ENCODE measurements at regions of chr1 and their contacts with region 1.

Region 1: GRCh38 chr1:231866392-231867331 is 240.1 kb downstream of the DISC1 start:
- DNase-seq: peak; percentile 39 to 64
- ATAC-seq: peak in 6 of 8 donors; percentile 28 to 69 (median 45)
- H3K4me3 ChIP-seq: no peak overlapping the region
- H3K27ac ChIP-seq: no peak overlapping the region
- H3K4me1 ChIP-seq: peaks cover 14 to 56% (median 41%) of the 10 kb centered on the region in 9 donors
- H3K27me3 ChIP-seq: no peaks in the 10 kb centered on the region
- CTCF ChIP-seq: peak; percentile 81 to 95 (median 90)

Region 2: GRCh38 chr1:231757101-231757404 is 109.6 kb before region 1 on chr1:
- intact Hi-C with region 1: loop called in 2 of 10 experiments (anchors 5 to 10 kb)
- DNase-seq: no peak
- ATAC-seq: peak in 5 of 8 donors; percentile 16 to 35 (median 31)
- H3K4me3 ChIP-seq: no peak overlapping the region
- H3K27ac ChIP-seq: no peak overlapping the region
- H3K4me1 ChIP-seq: peaks cover 0 to 6% (median 0%) of the 10 kb centered on the region in 9 donors
- H3K27me3 ChIP-seq: no peaks in the 10 kb centered on the region
- CTCF ChIP-seq: peak in 1 of 9 donors; percentile 28

Region 3: GRCh38 chr1:231899713-231900440 is 33.2 kb after region 1 on chr1:
- intact Hi-C with region 1: no loop called
- DNase-seq: no peak
- ATAC-seq: no peak
- H3K4me3 ChIP-seq: no peak overlapping the region
- H3K27ac ChIP-seq: no peak overlapping the region
- H3K4me1 ChIP-seq: peaks cover 0 to 6% (median 0%) of the 10 kb centered on the region in 9 donors
- H3K27me3 ChIP-seq: no peaks in the 10 kb centered on the region
- CTCF ChIP-seq: no peak

Region 4: DNA sequence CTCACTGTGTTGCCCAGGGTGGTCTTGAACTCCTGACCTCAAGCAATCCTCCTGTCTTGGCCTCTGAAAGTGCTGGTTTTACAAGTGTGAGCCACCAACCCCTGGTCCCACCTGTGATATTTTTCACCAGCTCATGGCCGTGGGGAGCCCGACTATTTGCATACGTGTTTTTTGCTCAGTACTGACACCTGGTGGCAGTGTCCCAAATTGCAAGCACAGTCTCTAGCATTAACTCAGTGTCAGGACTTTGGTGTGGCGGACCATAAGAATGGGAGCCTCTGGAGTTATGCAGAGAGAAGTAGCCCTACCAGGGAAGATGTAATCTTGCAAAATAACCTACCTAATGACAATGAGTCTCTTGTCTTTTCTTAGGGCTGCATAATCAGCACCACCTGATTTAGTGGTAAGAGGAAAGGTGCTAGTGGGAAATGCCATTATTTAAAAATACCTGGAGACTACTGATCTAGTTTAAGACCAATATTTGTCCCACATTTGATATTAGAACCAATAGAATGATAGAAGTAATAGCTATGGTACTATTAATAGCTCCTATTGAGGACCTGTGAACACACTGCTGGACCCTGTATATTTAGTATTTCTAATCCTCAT is 65.3 kb after region 1 on chr1:
- intact Hi-C with region 1: loop called in 3 of 10 experiments (anchors 2 to 5 kb)
- DNase-seq: no peak
- ATAC-seq: no peak
- H3K4me3 ChIP-seq: no peak overlapping the region
- H3K27ac ChIP-seq: no peak overlapping the region
- H3K4me1 ChIP-seq: peaks cover 15 to 82% (median 62%) of the 10 kb centered on the region in 9 donors
- H3K27me3 ChIP-seq: no peaks in the 10 kb centered on the region
- CTCF ChIP-seq: peak; percentile 11 to 58 (median 38)

Region 5: GRCh38 chr1:232306269-232306961 is 439.8 kb after region 1 on chr1:
- intact Hi-C with region 1: loop called in 6 of 10 experiments (anchors 5 to 10 kb)
- DNase-seq: peak; percentile 45 to 63
- ATAC-seq: peak; percentile 78 to 94 (median 90)
- H3K4me3 ChIP-seq: no peak overlapping the region
- H3K27ac ChIP-seq: peak overlapping the region in 8 of 10 donors; percentile 9 to 73 (median 56)
- H3K4me1 ChIP-seq: peaks cover 0 to 27% (median 19%) of the 10 kb centered on the region in 9 donors
- H3K27me3 ChIP-seq: no peaks in the 10 kb centered on the region
- CTCF ChIP-seq: peak; percentile 10 to 67 (median 46)

Region 6: GRCh38 chr1:232403017-232403714 is 536.5 kb after region 1 on chr1:
- intact Hi-C with region 1: loop called in 3 of 10 experiments (anchors 10 kb)
- DNase-seq: peak; percentile 25 to 29
- ATAC-seq: peak; percentile 29 to 80 (median 70)
- H3K4me3 ChIP-seq: no peak overlapping the region
- H3K27ac ChIP-seq: peak overlapping the region in 6 of 10 donors; percentile 17 to 56 (median 32)
- H3K4me1 ChIP-seq: peaks cover 0 to 37% (median 8%) of the 10 kb centered on the region in 9 donors
- H3K27me3 ChIP-seq: no peaks in the 10 kb centered on the region
- CTCF ChIP-seq: peak in 3 of 9 donors; percentile 23 to 33 (median 23)

Region 7: GRCh38 chr1:232620356-232620969 is 753.8 kb after region 1 on chr1:
- intact Hi-C with region 1: loop called in 6 of 10 experiments (anchors 5 kb)
- DNase-seq: peak in 1 of 2 donors; percentile 87
- ATAC-seq: peak; percentile 87 to 95 (median 92)
- H3K4me3 ChIP-seq: peak overlapping the region in 4 of 10 donors; percentile 16 to 28 (median 21)
- H3K27ac ChIP-seq: peak overlapping the region; percentile 29 to 86 (median 78)
- H3K4me1 ChIP-seq: peaks cover 4 to 100% (median 80%) of the 10 kb centered on the region in 9 donors
- H3K27me3 ChIP-seq: no peaks in the 10 kb centered on the region
- CTCF ChIP-seq: no peak